ENCODE measurements at regions of chr1 and their contacts with region 1.

Region 1: GRCh38 chr1:243255791-243256512 is at the start of gene SDCCAG8:
- DNase-seq: peak; percentile 99
- ATAC-seq: peak; percentile 86
- H3K4me3 ChIP-seq: peak within 1 kb of the TSS; percentile 78 to 95 (median 79)
- H3K27ac ChIP-seq: peak within 1 kb of the TSS; percentile 87 to 97 (median 96)
- H3K4me1 ChIP-seq: peaks cover 47 to 49% of the 10 kb centered on the region in 2 donors
- H3K27me3 ChIP-seq: no peaks in the 10 kb centered on the region
- CTCF ChIP-seq: no peak
- POLR2A ChIP-seq: peak; percentile 91 to 94
- total RNA-seq, gene SDCCAG8: 12.3 to 33.9 (median 26.1) TPM

Region 2: DNA sequence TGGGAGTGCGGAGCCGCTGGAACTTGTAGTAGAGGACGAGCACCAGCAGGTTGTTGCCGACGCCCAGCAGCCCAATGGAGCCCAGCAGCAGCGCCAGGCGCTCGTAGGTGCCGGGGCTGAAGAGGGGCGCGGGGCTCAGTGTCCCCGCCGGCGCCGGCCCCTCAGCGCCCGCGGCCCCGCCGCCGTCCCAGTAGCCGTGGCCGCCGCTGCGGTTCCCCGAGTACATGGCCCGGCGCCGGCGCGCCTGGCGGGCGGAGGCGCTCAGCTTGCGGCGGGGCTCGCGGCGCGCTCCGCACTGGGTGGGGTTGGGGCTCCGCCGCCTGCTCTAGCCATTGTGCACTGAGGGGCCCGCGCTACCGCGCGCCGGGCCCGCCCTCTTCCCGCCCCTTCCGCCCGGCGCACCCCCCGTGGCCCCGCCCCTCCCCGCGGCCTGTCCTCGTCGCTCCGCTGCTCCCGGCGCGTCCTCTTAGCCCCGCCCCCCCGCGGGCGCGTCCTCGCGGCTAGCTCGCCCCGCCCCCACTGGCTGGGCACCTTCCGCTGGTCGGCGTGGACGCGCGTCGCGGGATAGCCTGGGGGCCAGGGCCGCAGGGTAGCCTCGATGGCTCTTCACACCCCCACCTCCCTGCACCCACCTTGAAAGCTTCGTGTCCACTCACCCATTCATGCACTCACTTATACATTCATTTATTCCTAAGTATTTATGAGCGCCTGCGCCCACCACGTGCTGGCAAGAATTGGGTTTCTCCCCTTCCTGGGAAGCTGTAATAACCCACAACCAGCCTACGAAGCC is 1615.7 kb before region 1 on chr1 and contains the starts of genes CHML and OPN3:
- in situ Hi-C with region 1: no loop called
- intact Hi-C with region 1: loop called (anchors 10 kb)
- DNase-seq: peak; percentile 86 to 90
- ATAC-seq: peak; percentile 92 to 94
- H3K4me3 ChIP-seq: peak within 1 kb of the TSS; percentile 83 to 91 (median 84)
- H3K27ac ChIP-seq: peak within 1 kb of the TSS; percentile 72 to 88 (median 77)
- H3K4me1 ChIP-seq: peaks cover 11 to 23% of the 10 kb centered on the region in 2 donors
- H3K27me3 ChIP-seq: no peaks in the 10 kb centered on the region
- CTCF ChIP-seq: peak in 1 of 5 experiments; percentile 10
- POLR2A ChIP-seq: peak; percentile 81 to 89
- total RNA-seq, gene CHML: 3.2 to 6.5 (median 4.8) TPM
- total RNA-seq, gene OPN3: 4.6 to 9.6 (median 5.8) TPM

Region 3: DNA sequence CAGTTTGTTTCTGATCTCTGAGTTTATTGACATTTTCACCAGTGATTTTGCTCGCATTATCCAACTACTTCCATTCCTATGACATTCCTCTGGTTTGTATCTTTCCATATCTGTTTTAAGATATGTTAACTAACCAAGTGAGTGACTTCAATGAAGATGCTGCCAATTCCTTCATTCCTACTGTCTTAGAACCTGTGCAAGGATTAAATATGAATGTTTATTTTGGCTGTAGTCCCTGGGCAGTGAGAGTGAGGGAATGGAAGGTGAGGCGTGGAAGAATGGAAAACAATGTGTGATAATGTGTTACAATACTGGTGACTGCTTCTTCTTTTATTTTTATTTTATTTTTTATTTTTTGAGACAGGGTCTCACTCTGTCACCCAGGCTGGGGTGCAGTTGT is 182.9 kb after region 1 on chr1:
- in situ Hi-C with region 1: no loop called
- intact Hi-C with region 1: no loop called
- DNase-seq: no peak
- ATAC-seq: no peak
- H3K4me3 ChIP-seq: no peak overlapping the region
- H3K27ac ChIP-seq: no peak overlapping the region
- H3K4me1 ChIP-seq: peaks cover 0 to 14% of the 10 kb centered on the region in 2 donors
- H3K27me3 ChIP-seq: no peaks in the 10 kb centered on the region
- CTCF ChIP-seq: no peak
- POLR2A ChIP-seq: no peak

Region 4: DNA sequence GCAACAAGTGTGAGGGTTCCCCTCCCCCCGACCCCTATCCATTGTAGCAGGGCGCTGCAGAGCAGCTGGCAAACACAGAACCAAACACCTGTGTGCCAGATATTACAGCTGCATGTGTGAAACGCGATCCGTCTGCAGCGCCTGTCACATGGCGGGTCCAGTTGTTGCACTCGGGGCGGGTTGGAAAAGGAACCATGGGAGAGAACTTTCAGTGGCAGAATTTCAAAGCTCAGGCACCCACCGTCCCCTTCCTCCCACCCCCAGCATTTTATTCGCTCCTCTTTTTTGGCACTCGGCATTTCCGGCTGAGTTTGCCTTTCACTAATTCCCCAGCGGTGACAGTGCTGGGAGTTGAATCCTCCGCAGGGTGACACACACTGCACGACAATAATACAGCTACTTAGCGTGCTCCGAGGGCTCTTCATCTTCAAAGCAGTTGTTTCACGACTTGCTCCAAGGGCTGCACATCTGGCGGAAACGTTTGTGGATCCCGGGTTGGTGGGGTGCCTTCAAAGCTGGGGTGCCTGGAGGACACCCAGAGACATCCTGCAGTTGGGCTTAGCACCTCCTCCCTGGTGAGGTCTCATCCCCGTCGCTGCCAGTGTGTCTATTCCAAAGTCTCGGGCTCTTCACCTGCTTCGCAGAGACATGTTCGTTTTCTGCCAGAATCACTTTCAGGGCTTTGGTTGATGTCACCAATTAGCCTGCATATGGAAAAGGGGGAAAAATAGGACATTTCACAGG is 975.8 kb after region 1 on chr1:
- in situ Hi-C with region 1: no loop called
- intact Hi-C with region 1: loop called (anchors 10 kb)
- DNase-seq: peak; percentile 85 to 93
- ATAC-seq: peak; percentile 84 to 89
- H3K4me3 ChIP-seq: peak overlapping the region; percentile 38 to 56 (median 52)
- H3K27ac ChIP-seq: peak overlapping the region; percentile 85 to 94 (median 92)
- H3K4me1 ChIP-seq: peaks cover 15 to 23% of the 10 kb centered on the region in 2 donors
- H3K27me3 ChIP-seq: no peaks in the 10 kb centered on the region
- CTCF ChIP-seq: no peak
- POLR2A ChIP-seq: peak in 1 of 2 donors; percentile 30

Region 5: GRCh38 chr1:244451951-244452795 is 1196.2 kb after region 1 on chr1:
- in situ Hi-C with region 1: no loop called
- intact Hi-C with region 1: loop called (anchors 2 kb)
- DNase-seq: peak; percentile 99
- ATAC-seq: peak; percentile 92 to 94
- H3K4me3 ChIP-seq: peak overlapping the region; percentile 89 to 99 (median 94)
- H3K27ac ChIP-seq: peak overlapping the region; percentile 96 to 99 (median 98)
- H3K4me1 ChIP-seq: peaks cover 28% of the 10 kb centered on the region in 2 donors
- H3K27me3 ChIP-seq: no peaks in the 10 kb centered on the region
- CTCF ChIP-seq: peak in 4 of 5 experiments; percentile 29 to 53 (median 46)
- POLR2A ChIP-seq: no peak

Region 6: GRCh38 chr1:244835276-244836134 is 1579.6 kb after region 1 on chr1 and contains the start of gene COX20:
- in situ Hi-C with region 1: loop called in 1 of 4 experiments (anchors 25 kb)
- intact Hi-C with region 1: no loop called
- DNase-seq: peak; percentile 74 to 88
- ATAC-seq: peak; percentile 70 to 80
- H3K4me3 ChIP-seq: peak within 1 kb of the TSS; percentile 68 to 81 (median 76)
- H3K27ac ChIP-seq: peak within 1 kb of the TSS; percentile 96 to 99 (median 99)
- H3K4me1 ChIP-seq: peaks cover 11 to 33% of the 10 kb centered on the region in 2 donors
- H3K27me3 ChIP-seq: no peaks in the 10 kb centered on the region
- CTCF ChIP-seq: peak in 1 of 5 experiments; percentile 14
- POLR2A ChIP-seq: peak; percentile 65 to 66
- total RNA-seq, gene COX20: 22.7 to 72.0 (median 35.4) TPM

Region 7: DNA sequence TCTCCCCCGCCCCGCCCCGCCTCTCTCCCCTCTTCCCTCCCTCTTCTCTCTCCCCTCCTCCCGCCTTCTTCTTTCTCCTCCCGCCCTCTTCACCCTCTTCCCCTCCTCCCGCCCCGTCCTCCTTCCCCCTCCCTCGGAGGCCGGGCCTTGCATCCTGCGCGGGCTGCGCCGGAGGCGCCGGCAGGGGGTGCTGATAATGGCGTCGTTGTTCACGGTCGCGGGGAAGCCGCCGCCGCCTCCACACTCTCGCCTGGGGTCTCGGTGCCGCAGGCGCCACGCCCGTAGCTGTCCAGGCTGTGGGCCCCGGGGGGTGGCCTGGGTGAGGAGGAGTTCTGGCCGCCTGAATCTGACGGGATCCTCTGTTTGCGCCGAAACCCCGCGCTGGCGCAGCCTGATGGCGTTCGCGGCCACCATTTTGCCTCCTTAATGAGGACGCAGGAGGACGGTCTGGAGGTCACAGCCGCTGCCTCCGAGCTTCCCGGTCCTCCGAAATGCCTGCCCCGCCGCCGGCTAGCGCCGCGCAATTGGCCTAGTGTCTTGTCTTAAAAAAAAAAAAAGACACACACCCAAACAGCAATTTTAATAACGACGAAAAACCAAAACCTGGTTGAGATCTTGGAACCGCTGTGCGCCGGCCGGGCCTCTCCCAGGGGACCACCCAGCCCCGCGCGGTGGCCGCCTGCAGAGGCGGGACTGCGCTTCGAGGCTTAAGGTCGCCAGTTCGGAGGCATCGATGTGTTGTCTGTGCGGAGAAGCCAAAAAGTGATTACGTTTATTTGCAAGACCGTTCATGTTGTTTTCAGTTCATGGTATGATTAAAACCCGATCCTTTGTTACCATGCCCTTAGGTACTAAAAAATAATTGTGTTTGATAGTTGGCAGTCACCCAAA is 1715.0 kb after region 1 on chr1:
- in situ Hi-C with region 1: no loop called
- intact Hi-C with region 1: loop called (anchors 5 kb)
- DNase-seq: peak; percentile 93 to 97
- ATAC-seq: peak; percentile 78 to 83
- H3K4me3 ChIP-seq: peak overlapping the region; percentile 67 to 84 (median 79)
- H3K27ac ChIP-seq: peak overlapping the region; percentile 98 to 100 (median 98)
- H3K4me1 ChIP-seq: peaks cover 20 to 22% of the 10 kb centered on the region in 2 donors
- H3K27me3 ChIP-seq: no peaks in the 10 kb centered on the region
- CTCF ChIP-seq: peak; percentile 29 to 75 (median 63)
- POLR2A ChIP-seq: peak; percentile 73 to 80